ENCODE measurements at regions of chr3 and their contacts with region 1.

Region 1: GRCh38 chr3:187889601-187890404 is 144.5 kb upstream of the BCL6 start:
- DNase-seq: no peak
- H3K4me3 ChIP-seq: no peak overlapping the region
- CTCF ChIP-seq: no peak

Region 2: GRCh38 chr3:187807086-187807862 is 82.5 kb before region 1 on chr3:
- in situ Hi-C with region 1: loop called (anchors 5 kb)
- DNase-seq: no peak
- H3K4me3 ChIP-seq: no peak overlapping the region
- CTCF ChIP-seq: no peak

Measured in astrocyte of the cerebellum (primary cell).